Activated CD4-positive, alpha-beta T cell treated with anti-CD3 and anti-CD28 coated beads for 36 hours (primary cell): ENCODE measurements at regions of chr2 and their contacts with region 1.

Region 1: GRCh38 chr2:72887754-72888437 is 688 bp downstream of the SPR start:
- DNase-seq: peak; percentile 78
- ATAC-seq: peak; percentile 51
- H3K4me3 Mint-ChIP-seq: peak overlapping the region; percentile 70
- H3K27ac Mint-ChIP-seq: no peak overlapping the region
- H3K4me1 Mint-ChIP-seq: peaks cover 10% of the 10 kb centered on the region
- H3K27me3 Mint-ChIP-seq: peaks cover 53% of the 10 kb centered on the region

Region 2: DNA sequence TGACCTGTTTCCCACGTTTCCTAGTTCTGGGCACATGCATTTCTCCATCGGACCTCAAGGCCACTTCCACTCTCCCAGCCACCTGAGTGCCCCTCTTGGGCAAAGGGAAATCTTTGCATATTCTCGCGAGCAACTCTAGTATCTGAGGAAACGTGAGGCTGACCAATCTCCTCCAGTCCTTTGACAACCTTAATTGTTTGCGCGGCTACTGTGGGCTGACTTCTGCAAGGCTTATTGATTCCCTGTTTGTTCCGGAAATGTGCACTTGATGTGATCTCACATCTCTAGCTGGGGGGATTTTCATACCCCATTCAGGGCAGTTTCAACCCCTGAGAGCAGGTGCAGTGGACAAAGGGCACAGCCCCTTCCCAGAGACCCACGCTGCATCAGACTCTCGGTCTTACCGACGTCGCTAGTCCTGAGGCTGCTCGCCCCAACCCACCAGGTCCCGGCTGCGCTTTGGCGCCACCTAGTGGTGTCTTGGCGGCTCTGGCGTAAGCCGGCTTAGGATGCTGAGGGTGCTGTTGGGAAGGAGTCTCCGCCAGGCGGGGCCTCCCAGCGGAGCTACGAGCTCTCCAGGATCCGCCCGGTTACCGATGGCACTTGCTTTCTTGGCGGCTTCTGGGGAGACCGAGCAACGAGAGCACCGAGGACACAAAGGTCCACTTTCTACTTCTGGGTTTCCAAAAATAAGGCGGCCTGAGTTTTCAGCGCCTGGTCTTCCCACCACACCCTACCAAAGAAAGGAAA is 25.5 kb before region 1 on chr2:
- CTCF ChIA-PET with region 1: interaction called, 19 read pairs
- POLR2A ChIA-PET with region 1: no interaction called
- intact Hi-C with region 1: loop called in 1 of 2 experiments (anchors 1 kb)
- DNase-seq: peak; percentile 93
- ATAC-seq: peak; percentile 92
- H3K4me3 Mint-ChIP-seq: peak overlapping the region; percentile 36
- H3K27ac Mint-ChIP-seq: peak overlapping the region; percentile 2
- H3K4me1 Mint-ChIP-seq: peaks cover 10% of the 10 kb centered on the region
- H3K27me3 Mint-ChIP-seq: peaks cover 50% of the 10 kb centered on the region

Region 3: GRCh38 chr2:72934683-72935610 is 47.1 kb after region 1 on chr2:
- CTCF ChIA-PET with region 1: interaction called, 4 read pairs
- POLR2A ChIA-PET with region 1: no interaction called
- intact Hi-C with region 1: loop called (anchors 1 to 2 kb)
- DNase-seq: peak; percentile 33
- ATAC-seq: no peak
- H3K4me3 Mint-ChIP-seq: no peak overlapping the region
- H3K27ac Mint-ChIP-seq: no peak overlapping the region
- H3K4me1 Mint-ChIP-seq: no peaks in the 10 kb centered on the region
- H3K27me3 Mint-ChIP-seq: peaks cover 6% of the 10 kb centered on the region

Region 4: GRCh38 chr2:72993147-72993932 is 105.4 kb after region 1 on chr2:
- CTCF ChIA-PET with region 1: interaction called, 12 read pairs
- POLR2A ChIA-PET with region 1: no interaction called
- intact Hi-C with region 1: no loop called
- DNase-seq: peak; percentile 50
- ATAC-seq: peak; percentile 42
- H3K4me3 Mint-ChIP-seq: no peak overlapping the region
- H3K27ac Mint-ChIP-seq: no peak overlapping the region
- H3K4me1 Mint-ChIP-seq: no peaks in the 10 kb centered on the region
- H3K27me3 Mint-ChIP-seq: no peaks in the 10 kb centered on the region